ENCODE measurements at regions of chr19 and their contacts with region 1.

Region 1: GRCh38 chr19:45817010-45817724 is 2.1 kb upstream of the RSPH6A start:
- DNase-seq: peak; percentile 100
- ATAC-seq: peak; percentile 72
- H3K4me3 Mint-ChIP-seq: peak overlapping the region; percentile 89
- H3K27ac Mint-ChIP-seq: peak overlapping the region; percentile 83; the same call in 1 of the 2 replicates
- H3K4me1 Mint-ChIP-seq: peaks cover 37% of the 10 kb centered on the region
- H3K27me3 Mint-ChIP-seq: no peaks in the 10 kb centered on the region; the same call in none of the 2 replicates
- CTCF ChIP-seq: peak; percentile 98

Region 2: GRCh38 chr19:45717166-45717982 is 99.8 kb before region 1 on chr19:
- CTCF ChIA-PET with region 1: interaction called, 12 read pairs
- POLR2A ChIA-PET with region 1: no interaction called
- DNase-seq: peak; percentile 99
- ATAC-seq: peak; percentile 98
- H3K4me3 Mint-ChIP-seq: peak overlapping the region; percentile 97
- H3K27ac Mint-ChIP-seq: peak overlapping the region; percentile 97
- H3K4me1 Mint-ChIP-seq: peaks cover 25% of the 10 kb centered on the region
- H3K27me3 Mint-ChIP-seq: no peaks in the 10 kb centered on the region; the same call in 1 of the 2 replicates
- CTCF ChIP-seq: no peak

Region 3: DNA sequence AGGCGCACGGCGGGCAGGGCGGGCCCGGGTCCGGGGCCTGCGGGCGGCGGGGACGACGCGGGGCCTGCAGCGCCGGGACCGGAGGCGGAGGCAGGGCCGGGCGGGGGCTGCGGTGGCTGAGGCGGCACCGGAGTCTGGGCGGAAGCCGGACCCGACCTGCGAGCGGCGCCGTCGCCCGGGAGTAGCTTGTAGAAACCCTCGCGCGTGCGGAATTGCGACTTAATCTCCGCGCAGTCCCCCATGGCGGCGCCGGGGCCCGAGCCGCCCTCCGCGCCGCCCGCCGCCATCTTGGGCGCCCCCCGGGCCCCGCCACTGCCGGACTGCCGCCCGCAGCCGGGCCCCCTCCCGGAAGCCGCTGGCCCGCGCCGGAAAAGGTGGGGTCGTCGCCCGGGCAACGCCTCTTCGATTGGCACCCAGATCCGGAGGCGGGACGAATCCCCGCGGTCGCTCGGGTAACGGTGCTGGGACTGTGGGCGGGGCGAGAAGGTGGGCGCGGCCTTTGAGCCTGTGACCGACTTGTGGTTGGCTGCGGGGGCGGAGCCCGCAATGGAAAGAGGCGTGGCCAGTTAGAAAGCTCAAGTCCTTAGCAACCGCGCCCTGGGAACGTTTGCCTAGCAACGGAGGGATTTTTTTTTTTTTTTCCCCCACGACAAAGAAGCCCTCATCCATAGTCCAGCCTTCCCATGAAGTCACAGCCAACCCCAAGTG is 24.5 kb before region 1 on chr19 and contains the start of gene DMWD:
- CTCF ChIA-PET with region 1: interaction called, 43 read pairs
- POLR2A ChIA-PET with region 1: interaction called, 4 read pairs
- DNase-seq: peak; percentile 100
- ATAC-seq: peak; percentile 98
- H3K4me3 Mint-ChIP-seq: peak within 1 kb of the TSS; percentile 91
- H3K27ac Mint-ChIP-seq: peak within 1 kb of the TSS; percentile 61
- H3K4me1 Mint-ChIP-seq: peaks cover 17% of the 10 kb centered on the region
- H3K27me3 Mint-ChIP-seq: peaks cover 33% of the 10 kb centered on the region
- CTCF ChIP-seq: no peak
- total RNA-seq, gene DMWD: 50.2 to 60.7 TPM (median 56.6 TPM) in 3 replicates

Region 4: GRCh38 chr19:45852145-45852750 is 35.1 kb after region 1 on chr19:
- CTCF ChIA-PET with region 1: interaction called, 29 read pairs
- POLR2A ChIA-PET with region 1: no interaction called
- DNase-seq: no peak
- ATAC-seq: no peak
- H3K4me3 Mint-ChIP-seq: no peak overlapping the region
- H3K27ac Mint-ChIP-seq: no peak overlapping the region
- H3K4me1 Mint-ChIP-seq: no peaks in the 10 kb centered on the region
- H3K27me3 Mint-ChIP-seq: no peaks in the 10 kb centered on the region
- CTCF ChIP-seq: no peak

Region 5: GRCh38 chr19:45902651-45903625 is 85.8 kb after region 1 on chr19:
- CTCF ChIA-PET with region 1: interaction called, 27 read pairs
- POLR2A ChIA-PET with region 1: no interaction called
- DNase-seq: peak; percentile 99
- ATAC-seq: peak; percentile 84
- H3K4me3 Mint-ChIP-seq: peak overlapping the region; percentile 91
- H3K27ac Mint-ChIP-seq: peak overlapping the region; percentile 57; the same call in 1 of the 2 replicates
- H3K4me1 Mint-ChIP-seq: peaks cover 12% of the 10 kb centered on the region
- H3K27me3 Mint-ChIP-seq: peaks cover 25% of the 10 kb centered on the region
- CTCF ChIP-seq: no peak

Region 6: GRCh38 chr19:46016426-46017094 is 199.4 kb after region 1 on chr19:
- CTCF ChIA-PET with region 1: interaction called, 12 read pairs
- POLR2A ChIA-PET with region 1: no interaction called
- DNase-seq: peak; percentile 89
- ATAC-seq: peak; percentile 66
- H3K4me3 Mint-ChIP-seq: peak overlapping the region; percentile 87
- H3K27ac Mint-ChIP-seq: peak overlapping the region; percentile 45; the same call in 1 of the 2 replicates
- H3K4me1 Mint-ChIP-seq: peaks cover 21% of the 10 kb centered on the region
- H3K27me3 Mint-ChIP-seq: peaks cover 31% of the 10 kb centered on the region
- CTCF ChIP-seq: peak; percentile 81